ENCODE measurements at regions of chr7 and their contacts with region 1.

Region 1: DNA sequence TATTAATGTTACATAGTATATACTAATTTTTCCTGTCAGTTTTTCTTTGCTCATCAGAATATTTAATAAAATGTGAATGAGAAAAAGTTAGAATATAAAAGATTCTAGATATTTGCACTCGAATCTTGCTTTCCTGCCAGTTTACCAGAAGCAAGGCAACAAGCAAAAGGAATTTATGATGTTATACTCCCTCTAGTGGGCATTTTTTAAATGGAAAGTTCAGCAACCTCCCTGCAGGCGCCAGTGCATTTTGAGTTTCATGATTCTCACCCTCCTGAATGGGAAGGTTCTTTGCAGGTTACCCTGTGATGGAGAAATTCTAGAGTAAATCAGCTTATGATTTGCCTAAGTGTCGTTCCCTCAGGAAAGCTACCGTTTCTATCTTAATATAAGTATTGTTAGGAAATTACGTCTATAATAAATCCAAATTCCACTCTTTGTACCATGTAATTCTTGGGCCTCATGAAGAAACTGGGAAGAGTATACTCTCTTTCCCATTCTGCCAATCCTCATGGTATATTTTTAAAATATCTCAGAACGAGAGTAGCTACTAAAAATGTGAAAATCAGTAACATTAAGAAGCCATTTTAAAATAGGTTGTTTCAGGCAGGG is 350.0 kb downstream of the CRPPA start:
- DNase-seq: peak; percentile 39
- ATAC-seq: peak; percentile 83
- H3K4me3 ChIP-seq: no peak overlapping the region
- H3K27ac ChIP-seq: no peak overlapping the region
- H3K4me1 ChIP-seq: no peaks in the 10 kb centered on the region
- H3K27me3 ChIP-seq: peaks cover 3% of the 10 kb centered on the region
- CTCF ChIP-seq: peak; percentile 81

Region 2: GRCh38 chr7:14717816-14718215 is 1353.5 kb before region 1 on chr7:
- CTCF ChIA-PET with region 1: no interaction called
- POLR2A ChIA-PET with region 1: no interaction called
- in situ Hi-C with region 1: no loop called
- intact Hi-C with region 1: loop called (anchors 5 kb)
- DNase-seq: no peak
- ATAC-seq: no peak; the same call in 1 of the 2 replicates
- H3K4me3 ChIP-seq: no peak overlapping the region
- H3K27ac ChIP-seq: no peak overlapping the region
- H3K4me1 ChIP-seq: no peaks in the 10 kb centered on the region
- H3K27me3 ChIP-seq: no peaks in the 10 kb centered on the region
- CTCF ChIP-seq: peak; percentile 60; the same call in 1 of the 2 replicates

Region 3: GRCh38 chr7:15015545-15016326 is 1055.6 kb before region 1 on chr7:
- CTCF ChIA-PET with region 1: no interaction called
- POLR2A ChIA-PET with region 1: no interaction called
- in situ Hi-C with region 1: no loop called
- intact Hi-C with region 1: loop called (anchors 10 kb)
- DNase-seq: peak; percentile 22
- ATAC-seq: peak; percentile 97
- H3K4me3 ChIP-seq: peak overlapping the region; percentile 1 to 7; a peak in 2 of 4 replicates
- H3K27ac ChIP-seq: no peak overlapping the region
- H3K4me1 ChIP-seq: no peaks in the 10 kb centered on the region
- H3K27me3 ChIP-seq: no peaks in the 10 kb centered on the region
- CTCF ChIP-seq: peak; percentile 79

Region 4: GRCh38 chr7:15305002-15305600 is 766.3 kb before region 1 on chr7:
- CTCF ChIA-PET with region 1: no interaction called
- POLR2A ChIA-PET with region 1: no interaction called
- in situ Hi-C with region 1: no loop called
- intact Hi-C with region 1: loop called (anchors 1 kb)
- DNase-seq: peak; percentile 12
- ATAC-seq: no peak
- H3K4me3 ChIP-seq: no peak overlapping the region
- H3K27ac ChIP-seq: no peak overlapping the region
- H3K4me1 ChIP-seq: no peaks in the 10 kb centered on the region
- H3K27me3 ChIP-seq: no peaks in the 10 kb centered on the region
- CTCF ChIP-seq: peak; percentile 78; the same call in 1 of the 2 replicates

Region 5: DNA sequence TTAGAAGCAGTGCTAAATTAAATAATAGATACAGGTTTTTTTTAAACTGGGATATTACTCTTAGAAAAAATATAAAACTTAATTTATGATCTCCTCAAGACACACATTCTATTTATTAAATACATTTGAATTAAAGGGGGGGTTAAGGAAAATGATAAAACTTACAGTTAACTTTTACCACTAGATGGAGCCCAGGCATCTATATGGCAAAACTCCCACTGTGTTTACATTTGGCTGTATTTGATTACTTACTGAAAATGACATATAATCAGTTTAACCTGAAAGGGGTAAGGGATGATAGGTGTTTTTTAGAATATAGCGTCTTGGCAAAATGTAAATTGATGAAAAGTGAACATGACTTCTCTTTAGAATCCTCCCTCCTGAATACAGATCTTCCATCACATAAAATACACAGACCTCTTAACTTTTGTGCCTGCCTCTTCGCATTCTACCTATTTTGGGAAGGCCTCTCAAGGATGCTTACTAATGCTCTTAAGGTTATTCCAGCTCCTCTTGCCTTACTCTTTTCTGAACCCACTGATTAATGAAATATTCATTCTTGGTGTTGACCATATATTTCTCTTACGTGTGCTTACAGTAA is 745.2 kb before region 1 on chr7:
- CTCF ChIA-PET with region 1: no interaction called
- POLR2A ChIA-PET with region 1: no interaction called
- in situ Hi-C with region 1: no loop called
- intact Hi-C with region 1: loop called (anchors 2 kb)
- DNase-seq: peak; percentile 25
- ATAC-seq: no peak
- H3K4me3 ChIP-seq: no peak overlapping the region
- H3K27ac ChIP-seq: no peak overlapping the region
- H3K4me1 ChIP-seq: no peaks in the 10 kb centered on the region
- H3K27me3 ChIP-seq: no peaks in the 10 kb centered on the region
- CTCF ChIP-seq: peak; percentile 67; the same call in 1 of the 2 replicates

Region 6: DNA sequence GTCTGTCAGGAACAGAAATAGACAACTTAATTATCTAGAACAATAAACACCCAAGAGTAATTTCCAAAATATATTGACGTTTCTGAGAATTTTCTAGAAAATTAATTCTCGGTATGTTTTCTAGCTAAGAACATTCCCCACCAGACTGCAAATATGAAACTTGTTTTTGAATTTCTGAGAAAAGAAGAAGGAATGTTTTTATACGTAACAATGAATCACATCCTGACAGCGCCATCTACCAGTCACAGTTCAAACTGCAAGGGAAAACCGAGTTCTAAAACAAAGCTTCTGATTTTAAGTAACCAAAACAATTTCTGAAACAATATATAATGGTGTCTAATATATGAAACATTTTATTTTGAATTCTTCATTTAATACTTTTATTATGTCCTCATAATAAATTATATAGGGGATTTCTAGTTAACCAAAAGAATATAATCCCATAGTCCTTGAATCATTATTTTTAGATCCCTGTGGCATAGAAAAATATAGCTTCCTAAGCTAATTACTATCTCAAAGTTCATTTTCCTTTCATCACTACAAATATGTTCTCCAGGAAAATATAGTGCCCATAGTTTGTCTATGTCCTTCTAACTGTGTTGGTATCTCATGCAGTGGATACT is 350.4 kb before region 1 on chr7:
- CTCF ChIA-PET with region 1: no interaction called
- POLR2A ChIA-PET with region 1: no interaction called
- in situ Hi-C with region 1: no loop called
- intact Hi-C with region 1: loop called (anchors 10 kb)
- DNase-seq: peak; percentile 2
- ATAC-seq: no peak
- H3K4me3 ChIP-seq: no peak overlapping the region
- H3K27ac ChIP-seq: no peak overlapping the region
- H3K4me1 ChIP-seq: no peaks in the 10 kb centered on the region
- H3K27me3 ChIP-seq: no peaks in the 10 kb centered on the region
- CTCF ChIP-seq: peak; percentile 73; the same call in 1 of the 2 replicates

Region 7: GRCh38 chr7:16083931-16084330 is 12.6 kb after region 1 on chr7:
- CTCF ChIA-PET with region 1: no interaction called
- POLR2A ChIA-PET with region 1: no interaction called
- in situ Hi-C with region 1: no loop called
- intact Hi-C with region 1: no loop called
- DNase-seq: no peak
- ATAC-seq: no peak
- H3K4me3 ChIP-seq: no peak overlapping the region
- H3K27ac ChIP-seq: no peak overlapping the region
- H3K4me1 ChIP-seq: no peaks in the 10 kb centered on the region; the same call in 1 of the 2 replicates
- H3K27me3 ChIP-seq: no peaks in the 10 kb centered on the region
- CTCF ChIP-seq: no peak

Region 8: GRCh38 chr7:16094651-16095050 is 23.3 kb after region 1 on chr7:
- CTCF ChIA-PET with region 1: no interaction called
- POLR2A ChIA-PET with region 1: no interaction called
- in situ Hi-C with region 1: no loop called
- intact Hi-C with region 1: no loop called
- DNase-seq: no peak
- ATAC-seq: no peak
- H3K4me3 ChIP-seq: no peak overlapping the region
- H3K27ac ChIP-seq: no peak overlapping the region
- H3K4me1 ChIP-seq: no peaks in the 10 kb centered on the region
- H3K27me3 ChIP-seq: no peaks in the 10 kb centered on the region
- CTCF ChIP-seq: no peak

Measured in Panc1 (cell line).